ENCODE measurements at regions of chr2 and their contacts with region 1.

Region 1: DNA sequence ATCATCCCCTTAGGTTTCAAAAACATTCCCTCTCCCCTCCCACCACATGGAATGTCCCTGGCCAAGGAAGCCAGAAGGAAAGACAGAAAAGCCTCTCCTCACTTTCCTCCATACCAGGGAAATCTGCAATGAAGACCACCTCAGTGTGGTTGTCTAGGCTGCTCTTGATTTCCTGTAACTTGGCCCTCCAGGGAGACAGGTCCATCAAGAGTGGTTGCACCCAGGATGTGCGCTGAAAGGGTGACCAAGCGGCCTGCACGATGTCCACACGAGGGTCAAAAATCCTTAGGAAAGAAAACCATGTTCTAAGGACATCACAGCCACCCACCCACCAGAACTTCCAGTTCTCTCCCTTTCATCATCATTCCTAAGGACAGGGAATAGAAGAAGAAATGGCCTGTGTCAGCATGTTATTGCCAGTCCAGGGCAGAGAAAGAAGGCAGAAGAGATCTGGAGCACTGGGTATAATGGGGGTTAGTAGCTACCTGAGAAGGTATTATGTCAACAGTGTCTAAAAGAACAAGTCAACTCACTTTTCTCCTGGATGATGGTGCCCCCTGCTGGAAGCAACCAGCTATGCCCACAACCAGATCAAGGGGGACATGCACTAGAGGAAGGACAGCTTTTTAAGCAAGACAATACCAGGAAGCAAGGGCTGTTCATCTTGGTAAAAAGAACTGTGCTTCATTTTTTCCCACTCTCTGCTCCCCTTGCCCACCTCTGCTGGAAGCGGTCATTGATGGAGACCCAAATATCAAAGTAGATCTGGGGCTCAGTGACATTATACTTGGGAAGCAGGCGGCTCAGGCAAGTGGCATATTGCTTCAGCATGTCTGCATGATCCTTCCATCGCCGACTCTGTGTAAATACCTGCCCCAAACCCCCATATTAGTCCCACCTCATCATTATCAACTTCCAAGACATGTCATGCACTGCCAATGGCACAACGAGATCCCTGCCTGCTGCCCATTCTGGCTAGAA is 9.3 kb downstream of the GGCX start:
- DNase-seq: peak; percentile 72
- ATAC-seq: peak; percentile 81
- H3K4me3 ChIP-seq: no peak overlapping the region
- H3K27ac ChIP-seq: 0 out of 2 replicates have a peak overlapping the region, but pooled peaks have one; percentile 4
- H3K4me1 ChIP-seq: no peaks in the 10 kb centered on the region
- H3K27me3 ChIP-seq: no peaks in the 10 kb centered on the region
- CTCF ChIP-seq: peak; percentile 91 to 96 (median 95)
- POLR2A ChIP-seq: no peak
- RAD21 ChIP-seq: peak; percentile 99

Region 2: DNA sequence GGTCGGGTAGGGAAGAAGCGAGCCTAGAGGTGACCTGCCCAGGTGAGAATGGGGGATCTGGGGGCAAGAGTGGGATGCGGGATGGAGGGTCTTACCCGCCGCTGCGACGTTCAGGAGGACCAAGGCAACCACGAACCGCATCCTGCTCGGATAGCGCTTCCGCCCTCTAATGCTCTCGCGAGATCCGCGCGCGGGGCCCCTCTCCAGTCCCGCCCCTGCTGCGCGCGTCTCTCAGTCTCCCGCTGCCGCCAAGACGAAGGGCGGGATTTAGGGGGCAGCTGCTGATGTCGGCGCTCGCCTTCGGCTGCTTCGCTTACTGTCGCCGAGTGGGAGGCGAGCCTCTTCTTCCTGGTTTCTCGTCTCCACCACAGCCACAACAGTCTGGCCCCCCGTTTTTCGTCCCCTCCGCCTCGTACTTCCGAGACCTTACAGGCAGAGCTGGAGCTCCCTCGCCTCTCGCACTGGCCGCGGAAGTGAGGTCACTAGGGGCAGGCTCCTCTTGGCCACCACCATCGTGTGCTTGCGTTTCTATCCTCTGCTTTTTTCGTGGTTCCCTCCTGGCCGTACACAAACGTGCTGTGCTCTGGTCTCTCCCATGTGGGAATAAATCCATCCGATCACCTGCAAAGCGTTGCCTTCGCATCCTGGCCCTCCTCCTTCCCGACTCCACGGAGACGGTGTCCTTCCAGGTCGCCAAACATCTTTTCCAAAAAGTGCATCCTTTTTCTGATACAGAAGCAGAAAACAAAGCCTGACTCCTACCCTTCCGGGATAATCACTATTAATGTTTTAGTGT is 224.0 kb before region 1 on chr2 and contains the start of gene TGOLN2:
- CTCF ChIA-PET with region 1: no interaction called
- POLR2A ChIA-PET with region 1: no interaction called
- RAD21 ChIA-PET with region 1: no interaction called
- intact Hi-C with region 1: loop called (anchors 10 kb)
- DNase-seq: peak; percentile 77
- ATAC-seq: peak; percentile 99
- H3K4me3 ChIP-seq: peak within 1 kb of the TSS; percentile 89 to 96
- H3K27ac ChIP-seq: peak within 1 kb of the TSS; percentile 76
- H3K4me1 ChIP-seq: peaks cover 10 to 21% of the 10 kb centered on the region in 2 experiments
- H3K27me3 ChIP-seq: no peaks in the 10 kb centered on the region
- CTCF ChIP-seq: no peak
- POLR2A ChIP-seq: peak; percentile 98
- RAD21 ChIP-seq: no peak; the same call in 1 of the 2 replicates
- total RNA-seq, gene TGOLN2: 43.2 TPM

Region 3: DNA sequence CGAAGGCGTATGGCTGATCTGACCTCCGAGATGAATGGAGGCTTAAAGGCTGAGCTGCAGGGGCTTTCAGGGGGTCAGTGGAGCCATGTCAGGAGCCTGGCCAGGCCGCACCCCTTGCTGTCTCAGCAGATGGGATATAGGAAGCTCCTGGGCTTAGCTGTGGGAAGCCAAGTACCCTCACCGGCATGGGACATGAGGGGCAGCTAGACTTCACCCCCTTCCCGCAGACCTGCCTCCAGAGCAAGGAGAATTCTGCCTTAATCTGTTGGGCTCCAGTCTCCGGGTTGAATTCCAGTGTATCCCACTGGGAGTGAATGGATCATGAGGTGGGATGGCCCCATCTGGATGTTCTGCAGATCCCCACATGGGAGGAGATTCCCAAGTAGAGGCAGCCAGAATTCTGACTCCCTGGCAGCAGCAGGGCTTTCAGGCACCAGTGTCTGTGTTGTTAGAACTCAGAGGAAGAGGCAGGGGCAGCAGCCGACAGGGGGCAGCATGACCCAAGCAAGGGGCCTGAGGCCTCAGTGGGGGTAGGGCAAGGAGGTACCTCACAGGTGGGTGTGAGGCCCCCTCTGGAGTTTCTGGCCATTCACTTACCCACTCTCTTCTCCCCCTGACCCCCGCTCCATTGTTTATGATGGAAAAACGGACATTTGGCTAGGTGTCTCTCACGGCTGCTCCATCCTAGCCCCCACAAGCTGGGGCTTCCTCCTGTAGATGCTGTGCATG is 160.9 kb before region 1 on chr2:
- CTCF ChIA-PET with region 1: interaction called, 18 read pairs
- POLR2A ChIA-PET with region 1: interaction called, 3 read pairs
- RAD21 ChIA-PET with region 1: interaction called, 4 read pairs
- intact Hi-C with region 1: loop called (anchors 1 kb)
- DNase-seq: peak; percentile 18
- ATAC-seq: peak; percentile 89
- H3K4me3 ChIP-seq: no peak overlapping the region
- H3K27ac ChIP-seq: no peak overlapping the region
- H3K4me1 ChIP-seq: no peaks in the 10 kb centered on the region
- H3K27me3 ChIP-seq: no peaks in the 10 kb centered on the region
- CTCF ChIP-seq: peak; percentile 58 to 82 (median 70); a peak in 5 of 6 replicates
- POLR2A ChIP-seq: no peak
- RAD21 ChIP-seq: peak; percentile 90

Region 4: DNA sequence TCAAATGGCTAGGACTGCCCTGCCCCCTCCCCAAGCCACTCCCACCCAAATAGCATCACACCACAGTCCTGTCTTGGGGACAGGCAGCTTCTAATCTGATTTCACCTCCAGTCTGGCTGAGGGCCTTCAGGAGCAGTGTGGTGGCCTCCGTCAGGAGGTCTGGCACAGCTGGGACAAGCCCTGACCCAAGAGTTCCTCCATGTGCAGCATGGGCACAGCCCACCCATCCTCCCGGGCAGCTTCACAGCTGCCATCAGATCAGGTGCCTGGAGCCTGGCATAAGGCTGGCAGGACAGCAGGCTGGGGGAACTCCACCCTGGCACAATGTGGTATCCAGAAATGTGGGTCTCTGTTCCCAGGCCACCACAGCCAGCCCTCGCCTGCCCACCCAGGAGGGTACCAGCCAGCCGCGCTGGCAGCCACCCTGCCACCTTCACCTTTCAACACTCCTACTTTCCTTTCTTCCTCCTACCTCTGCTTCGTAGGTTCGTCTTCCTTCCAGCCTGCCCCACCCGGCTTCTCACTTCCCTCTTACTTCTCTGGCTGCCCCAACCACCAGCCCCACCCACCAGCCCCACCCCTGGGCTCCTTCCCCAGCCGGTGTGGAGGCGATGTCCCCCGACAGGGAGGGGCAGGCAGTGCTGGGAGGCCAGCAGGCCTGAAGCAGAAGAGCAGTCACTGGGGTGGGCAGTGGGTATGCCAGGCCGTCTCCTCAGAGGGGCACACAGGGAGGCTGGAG is 142.0 kb before region 1 on chr2 and contains the start of gene CAPG:
- CTCF ChIA-PET with region 1: interaction called, 10 read pairs
- POLR2A ChIA-PET with region 1: interaction called, 3 read pairs
- RAD21 ChIA-PET with region 1: no interaction called
- intact Hi-C with region 1: no loop called
- DNase-seq: no peak
- ATAC-seq: peak; percentile 64
- H3K4me3 ChIP-seq: peak within 1 kb of the TSS; percentile 25 to 56
- H3K27ac ChIP-seq: peak within 1 kb of the TSS; percentile 50
- H3K4me1 ChIP-seq: peaks cover 35 to 54% of the 10 kb centered on the region in 2 experiments
- H3K27me3 ChIP-seq: no peaks in the 10 kb centered on the region
- CTCF ChIP-seq: no peak
- POLR2A ChIP-seq: no peak
- RAD21 ChIP-seq: no peak
- total RNA-seq, gene CAPG: 223 TPM

Region 5: GRCh38 chr2:85420536-85421259 is 131.3 kb before region 1 on chr2:
- CTCF ChIA-PET with region 1: interaction called, 118 read pairs
- POLR2A ChIA-PET with region 1: interaction called, 236 read pairs
- RAD21 ChIA-PET with region 1: interaction called, 25 read pairs
- intact Hi-C with region 1: loop called (anchors 1 kb)
- DNase-seq: no peak
- ATAC-seq: peak; percentile 75
- H3K4me3 ChIP-seq: no peak overlapping the region
- H3K27ac ChIP-seq: peak overlapping the region; percentile 88
- H3K4me1 ChIP-seq: peaks cover 35 to 43% of the 10 kb centered on the region in 2 experiments; a peak in 3 of 4 replicates
- H3K27me3 ChIP-seq: no peaks in the 10 kb centered on the region
- CTCF ChIP-seq: peak in 2 of 3 experiments; percentile 92 to 100; a peak in 4 of 6 replicates
- POLR2A ChIP-seq: no peak
- RAD21 ChIP-seq: no peak

Region 6: GRCh38 chr2:85445316-85446295 is 106.4 kb before region 1 on chr2:
- CTCF ChIA-PET with region 1: interaction called, 3 read pairs
- POLR2A ChIA-PET with region 1: interaction called, 12 read pairs
- RAD21 ChIA-PET with region 1: no interaction called
- intact Hi-C with region 1: no loop called
- DNase-seq: no peak
- ATAC-seq: peak; percentile 53; the same call in 1 of the 2 replicates
- H3K4me3 ChIP-seq: no peak overlapping the region
- H3K27ac ChIP-seq: peak overlapping the region; percentile 46; the same call in 1 of the 2 replicates
- H3K4me1 ChIP-seq: peaks cover 22 to 26% of the 10 kb centered on the region in 2 experiments
- H3K27me3 ChIP-seq: no peaks in the 10 kb centered on the region
- CTCF ChIP-seq: no peak
- POLR2A ChIP-seq: no peak
- RAD21 ChIP-seq: no peak

Region 7: GRCh38 chr2:85457877-85458316 is 94.1 kb before region 1 on chr2:
- CTCF ChIA-PET with region 1: no interaction called
- POLR2A ChIA-PET with region 1: interaction called, 15 read pairs
- RAD21 ChIA-PET with region 1: no interaction called
- intact Hi-C with region 1: no loop called
- DNase-seq: peak; percentile 95
- ATAC-seq: peak; percentile 81
- H3K4me3 ChIP-seq: peak overlapping the region in 1 of 2 experiments; percentile 20; a peak in 1 of 4 replicates
- H3K27ac ChIP-seq: peak overlapping the region; percentile 85
- H3K4me1 ChIP-seq: peaks cover 53 to 69% of the 10 kb centered on the region in 2 experiments
- H3K27me3 ChIP-seq: no peaks in the 10 kb centered on the region
- CTCF ChIP-seq: no peak
- POLR2A ChIP-seq: no peak
- RAD21 ChIP-seq: no peak; the same call in 1 of the 2 replicates

Region 8: GRCh38 chr2:85642725-85643124 is 90.7 kb after region 1 on chr2:
- CTCF ChIA-PET with region 1: no interaction called
- POLR2A ChIA-PET with region 1: no interaction called
- RAD21 ChIA-PET with region 1: no interaction called
- intact Hi-C with region 1: no loop called
- DNase-seq: no peak
- ATAC-seq: no peak
- H3K4me3 ChIP-seq: no peak overlapping the region
- H3K27ac ChIP-seq: no peak overlapping the region
- H3K4me1 ChIP-seq: no peaks in the 10 kb centered on the region
- H3K27me3 ChIP-seq: no peaks in the 10 kb centered on the region
- CTCF ChIP-seq: no peak
- POLR2A ChIP-seq: no peak
- RAD21 ChIP-seq: no peak